Activated CD4-positive, alpha-beta T cell treated with anti-CD3 and anti-CD28 coated beads for 36 hours (primary cell): ENCODE measurements at regions of chr17 and their contacts with region 1.

Region 1: DNA sequence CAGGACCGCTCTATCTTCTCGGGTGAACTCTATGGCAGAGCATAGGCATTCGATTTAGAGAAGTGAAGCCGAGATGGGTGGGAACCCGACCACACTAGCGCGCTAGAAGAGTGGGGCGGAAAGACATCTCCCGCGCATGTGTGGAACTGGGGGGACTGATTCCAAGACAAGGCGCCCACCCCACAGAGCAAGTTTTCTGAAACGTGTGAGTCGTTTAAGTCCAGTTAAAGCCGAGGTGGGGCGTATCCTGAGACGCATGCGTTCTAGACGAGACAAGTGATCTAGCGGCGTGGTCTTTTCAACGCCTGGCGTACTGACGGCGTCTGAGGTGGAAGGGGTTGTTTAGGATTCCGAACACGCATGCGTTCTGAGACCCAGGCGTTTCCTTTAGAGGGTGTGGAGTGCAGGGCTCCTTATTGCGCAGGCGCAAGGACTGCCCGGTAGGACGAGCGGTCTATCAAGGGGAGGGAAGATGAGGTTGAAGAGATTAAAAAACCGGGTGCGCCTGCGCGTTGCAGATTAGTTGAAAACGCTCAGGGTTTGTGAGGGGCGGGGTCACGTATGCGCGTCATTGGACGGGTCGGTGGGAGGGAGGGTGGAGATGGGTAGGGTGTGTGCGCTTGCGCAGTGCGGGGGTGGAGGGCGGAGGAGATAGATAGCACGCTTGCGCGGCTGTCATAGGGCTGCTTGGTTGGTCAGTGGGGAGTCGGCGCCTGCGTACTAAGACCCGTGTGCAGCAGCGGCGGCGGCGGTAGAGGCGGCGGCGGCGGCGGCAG is at the start of gene EIF5A:
- DNase-seq: peak; percentile 100
- ATAC-seq: peak; percentile 86
- H3K4me3 Mint-ChIP-seq: peak within 1 kb of the TSS; percentile 96
- H3K27ac Mint-ChIP-seq: peak within 1 kb of the TSS; percentile 100
- H3K4me1 Mint-ChIP-seq: peaks cover 36% of the 10 kb centered on the region
- H3K27me3 Mint-ChIP-seq: no peaks in the 10 kb centered on the region
- total RNA-seq, gene EIF5A: 780 to 934 TPM

Region 2: DNA sequence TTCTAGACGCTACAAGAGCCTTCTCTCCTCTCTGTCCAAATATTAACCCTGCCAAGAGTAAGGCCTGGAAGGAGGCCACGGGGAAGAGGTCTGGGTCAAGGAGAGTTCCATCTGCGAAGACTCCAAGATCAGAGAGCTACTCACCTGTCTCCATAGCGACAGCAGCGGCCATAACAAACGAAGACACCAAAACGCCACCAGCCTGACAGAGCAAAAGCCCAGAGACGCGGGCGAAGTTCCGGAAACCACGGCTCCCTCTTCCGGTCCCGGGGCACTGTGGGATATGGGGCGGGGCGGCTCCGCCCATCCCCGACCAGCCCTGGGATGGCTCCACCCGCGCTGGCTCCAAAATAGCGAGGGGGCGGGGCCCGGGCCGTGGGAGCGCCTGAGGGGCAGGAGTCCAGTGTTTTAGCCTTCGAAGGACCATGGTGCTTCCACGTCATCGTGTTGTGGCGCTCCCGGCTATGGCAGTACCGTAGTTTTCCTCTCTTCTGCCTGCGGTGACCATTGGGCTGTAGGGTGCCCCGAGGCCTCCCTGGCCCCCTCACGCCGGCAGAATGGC is 655.7 kb before region 1 on chr17 and contains the starts of genes C17orf100 and MED31:
- CTCF ChIA-PET with region 1: no interaction called
- POLR2A ChIA-PET with region 1: no interaction called
- intact Hi-C with region 1: loop called in 1 of 2 experiments (anchors 5 kb)
- DNase-seq: peak; percentile 97
- ATAC-seq: peak; percentile 95
- H3K4me3 Mint-ChIP-seq: peak within 1 kb of the TSS; percentile 98
- H3K27ac Mint-ChIP-seq: peak within 1 kb of the TSS; percentile 99
- H3K4me1 Mint-ChIP-seq: peaks cover 55% of the 10 kb centered on the region
- H3K27me3 Mint-ChIP-seq: peaks cover 2% of the 10 kb centered on the region
- total RNA-seq, gene C17orf100: 1.6 to 2.0 TPM
- total RNA-seq, gene MED31: 17.7 to 24.5 TPM

Region 3: DNA sequence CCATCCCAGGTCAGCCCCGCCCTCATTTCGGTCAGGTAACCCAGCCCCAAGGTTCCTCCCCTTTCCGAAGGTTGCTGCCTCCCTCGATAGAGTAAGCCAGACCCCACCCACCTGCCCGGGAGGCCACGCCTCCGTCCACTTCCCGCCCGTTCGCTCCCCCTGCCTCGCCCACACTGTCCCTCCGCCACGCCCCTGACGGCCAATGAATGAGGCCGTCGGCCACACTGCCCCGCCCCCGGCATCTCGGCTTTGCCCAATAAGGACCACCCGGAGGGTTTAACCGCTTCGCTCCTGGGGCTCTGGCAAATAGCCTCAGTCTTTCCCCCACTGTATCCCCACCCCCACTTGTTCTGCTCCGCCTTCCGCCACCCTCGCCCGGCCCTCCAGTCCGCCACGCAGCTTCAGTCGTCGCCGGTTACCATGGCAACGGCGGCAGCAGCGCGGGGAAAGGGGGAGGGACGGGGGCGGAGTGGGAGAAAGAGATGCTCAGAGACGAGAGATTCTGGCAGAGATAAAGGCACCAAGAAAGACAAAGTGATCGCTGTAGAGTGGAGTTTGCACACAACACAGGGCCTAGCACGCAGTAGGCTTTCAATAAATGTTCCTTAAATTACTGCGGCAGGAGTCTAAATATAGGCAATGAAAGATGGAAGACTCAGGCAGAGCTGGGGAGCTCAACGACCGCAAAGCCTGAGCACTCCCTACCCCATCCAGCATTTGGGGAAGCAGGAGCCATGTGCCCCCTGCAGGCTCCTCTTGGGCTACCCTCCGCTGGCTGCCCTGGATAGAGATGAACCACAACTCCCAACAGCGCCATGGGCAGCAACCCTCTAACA is 92.6 kb before region 1 on chr17:
- CTCF ChIA-PET with region 1: no interaction called
- POLR2A ChIA-PET with region 1: no interaction called
- intact Hi-C with region 1: loop called in 1 of 2 experiments (anchors 1 kb)
- DNase-seq: peak; percentile 100
- ATAC-seq: peak; percentile 82
- H3K4me3 Mint-ChIP-seq: peak overlapping the region; percentile 81
- H3K27ac Mint-ChIP-seq: peak overlapping the region; percentile 93
- H3K4me1 Mint-ChIP-seq: peaks cover 71% of the 10 kb centered on the region
- H3K27me3 Mint-ChIP-seq: peaks cover 7% of the 10 kb centered on the region

Region 4: DNA sequence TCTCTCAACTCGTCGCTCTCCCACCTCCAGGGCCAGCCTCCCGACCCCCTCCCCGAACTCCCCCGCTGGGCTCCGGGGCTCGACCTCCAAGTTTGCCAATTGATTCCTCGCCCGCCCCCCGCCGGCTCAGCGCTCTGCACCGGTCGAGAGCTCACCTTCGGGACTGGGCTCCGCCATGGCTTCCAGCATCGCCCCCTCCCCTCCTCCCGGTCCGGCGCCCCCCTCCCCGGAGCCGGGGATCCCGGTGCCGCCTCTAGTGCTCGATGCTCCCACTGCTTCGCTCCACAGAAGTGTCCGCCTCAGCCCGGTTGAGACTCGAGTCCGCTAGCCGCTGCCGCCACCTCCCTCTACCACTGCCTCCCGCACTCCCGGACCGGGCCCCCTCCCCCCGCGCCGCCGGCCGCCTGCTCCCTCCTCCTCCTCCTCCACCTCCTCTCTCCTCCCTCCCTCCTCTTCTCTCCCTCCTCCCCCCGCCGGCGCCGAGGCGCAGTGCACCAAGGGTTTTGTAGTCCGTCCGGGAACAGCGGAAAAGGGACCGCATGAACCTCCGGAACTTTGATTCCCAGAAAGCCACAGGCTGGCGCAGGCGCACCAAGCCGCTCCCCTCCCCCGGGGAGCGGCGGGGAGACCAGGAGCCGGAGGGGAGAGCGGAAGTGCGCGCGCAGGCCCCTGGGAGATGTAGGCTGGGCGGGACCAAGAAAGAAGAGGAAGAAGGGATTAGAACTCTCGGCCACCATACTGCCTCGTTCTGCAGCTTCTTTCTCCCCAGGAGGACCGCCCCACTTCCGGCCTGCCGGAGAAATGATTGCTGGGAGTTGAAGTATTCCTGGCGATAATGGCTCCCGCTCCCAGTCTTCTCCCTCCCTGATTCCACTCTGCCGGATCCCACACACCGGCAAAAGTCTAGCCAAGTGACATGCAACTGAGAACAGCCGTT is 67.7 kb before region 1 on chr17 and contains the start of gene PHF23:
- CTCF ChIA-PET with region 1: no interaction called
- POLR2A ChIA-PET with region 1: interaction called, 3 read pairs
- intact Hi-C with region 1: loop called (anchors 1 to 2 kb)
- DNase-seq: peak; percentile 99
- ATAC-seq: peak; percentile 74
- H3K4me3 Mint-ChIP-seq: peak within 1 kb of the TSS; percentile 97
- H3K27ac Mint-ChIP-seq: peak within 1 kb of the TSS; percentile 93
- H3K4me1 Mint-ChIP-seq: peaks cover 61% of the 10 kb centered on the region
- H3K27me3 Mint-ChIP-seq: no peaks in the 10 kb centered on the region
- total RNA-seq, gene PHF23: 23.6 to 35.2 TPM

Region 5: DNA sequence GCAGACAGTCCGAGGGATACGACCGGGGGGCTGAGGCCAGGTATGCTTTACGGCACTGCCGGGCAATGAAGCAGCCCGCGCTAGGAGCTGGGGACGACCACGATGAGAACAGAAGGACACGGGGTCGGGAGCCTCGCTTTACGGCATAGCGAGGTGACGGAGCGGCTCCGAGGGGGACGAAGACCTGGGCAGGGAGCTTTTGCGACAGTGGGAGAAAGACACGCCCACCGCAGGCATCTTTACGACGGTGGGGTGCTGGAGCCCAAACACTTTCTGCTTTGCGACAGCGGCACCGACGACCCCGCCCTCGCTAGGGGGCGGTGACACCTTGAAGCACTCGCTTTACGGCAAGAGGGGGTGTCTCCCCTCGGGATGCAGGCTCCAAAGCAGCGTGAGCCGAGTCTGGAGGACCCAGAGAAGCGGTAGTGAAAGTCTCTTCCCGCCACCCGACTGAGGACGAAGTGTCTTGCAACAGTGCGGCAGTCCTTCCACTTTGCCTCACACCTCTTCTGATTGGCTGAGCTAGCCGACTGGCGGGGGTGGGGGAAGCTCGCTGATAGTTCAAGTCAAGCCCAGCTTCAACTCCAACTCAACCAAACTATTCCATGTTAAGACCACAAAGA is 22.4 kb after region 1 on chr17:
- CTCF ChIA-PET with region 1: interaction called, 7 read pairs
- POLR2A ChIA-PET with region 1: interaction called, 9 read pairs
- intact Hi-C with region 1: loop called (anchors 1 kb)
- DNase-seq: peak; percentile 98
- ATAC-seq: peak; percentile 69
- H3K4me3 Mint-ChIP-seq: peak overlapping the region; percentile 89
- H3K27ac Mint-ChIP-seq: peak overlapping the region; percentile 96
- H3K4me1 Mint-ChIP-seq: peaks cover 44% of the 10 kb centered on the region
- H3K27me3 Mint-ChIP-seq: no peaks in the 10 kb centered on the region

Region 6: DNA sequence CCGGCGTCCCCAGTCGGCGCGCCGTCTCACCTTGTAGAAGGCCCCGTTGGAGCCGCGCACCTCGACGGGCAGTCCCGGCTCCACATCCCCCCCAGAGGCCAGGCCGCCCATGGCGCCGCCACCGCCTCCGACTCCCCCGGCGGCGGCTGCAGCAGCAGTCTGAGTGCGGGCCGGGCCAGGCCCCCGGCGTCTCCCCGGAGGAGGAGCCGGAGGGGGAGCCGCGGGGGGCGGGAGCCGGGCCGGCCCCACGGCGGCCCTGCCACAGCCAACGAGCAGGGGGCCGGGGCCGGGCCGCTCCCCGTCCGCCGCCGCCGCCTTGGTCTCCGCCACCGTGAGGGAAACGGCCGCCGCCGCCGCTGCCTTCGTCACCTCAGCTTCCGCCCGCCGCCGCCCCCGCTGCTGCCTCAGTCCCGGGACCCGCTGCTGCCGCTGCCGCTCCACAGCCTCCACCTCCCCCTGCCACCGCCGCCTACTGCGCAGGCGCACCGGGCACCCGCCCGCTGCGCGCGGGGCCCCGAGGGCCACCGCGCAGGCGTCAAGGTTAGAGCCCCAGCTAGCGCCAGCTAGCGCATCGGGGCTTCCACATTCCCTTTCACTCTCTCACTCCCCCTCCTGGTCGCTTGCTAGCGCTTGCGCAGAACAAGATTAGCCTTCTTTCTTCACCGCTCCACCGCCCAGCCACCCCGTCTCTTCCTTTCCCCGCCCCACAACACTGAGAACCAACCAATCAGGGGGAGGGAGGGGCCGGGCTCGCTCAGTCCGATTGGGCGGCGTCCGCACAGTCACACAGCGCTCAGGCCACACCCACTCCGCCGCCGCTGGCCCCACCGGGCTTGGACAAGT is 307.5 kb after region 1 on chr17 and contains the start of gene FXR2:
- CTCF ChIA-PET with region 1: no interaction called
- POLR2A ChIA-PET with region 1: no interaction called
- intact Hi-C with region 1: loop called in 1 of 2 experiments (anchors 1 kb)
- DNase-seq: peak; percentile 100
- ATAC-seq: peak; percentile 95
- H3K4me3 Mint-ChIP-seq: peak within 1 kb of the TSS; percentile 85
- H3K27ac Mint-ChIP-seq: peak within 1 kb of the TSS; percentile 93
- H3K4me1 Mint-ChIP-seq: peaks cover 32% of the 10 kb centered on the region
- H3K27me3 Mint-ChIP-seq: no peaks in the 10 kb centered on the region
- total RNA-seq, gene FXR2: 35.6 to 50.2 TPM

Region 7: GRCh38 chr17:7887482-7888183 is 580.5 kb after region 1 on chr17:
- CTCF ChIA-PET with region 1: no interaction called
- POLR2A ChIA-PET with region 1: no interaction called
- intact Hi-C with region 1: loop called in 1 of 2 experiments (anchors 2 kb)
- DNase-seq: peak; percentile 94
- ATAC-seq: peak; percentile 79
- H3K4me3 Mint-ChIP-seq: no peak overlapping the region
- H3K27ac Mint-ChIP-seq: no peak overlapping the region
- H3K4me1 Mint-ChIP-seq: peaks cover 4% of the 10 kb centered on the region
- H3K27me3 Mint-ChIP-seq: no peaks in the 10 kb centered on the region